ENCODE measurements at regions of chr5 and their contacts with region 1.

Region 1: GRCh38 chr5:66814146-66814991 is 218.2 kb downstream of the MAST4 start:
- DNase-seq: no peak
- H3K4me3 ChIP-seq: no peak overlapping the region
- H3K27ac ChIP-seq: no peak overlapping the region
- H3K27me3 ChIP-seq: peaks cover 23% of the 10 kb centered on the region
- CTCF ChIP-seq: peak; percentile 80

Region 2: GRCh38 chr5:66828548-66829357 is 14.4 kb after region 1 on chr5:
- CTCF ChIA-PET with region 1: interaction called, 58 read pairs
- POLR2A ChIA-PET with region 1: no interaction called
- DNase-seq: no peak
- H3K4me3 ChIP-seq: peak overlapping the region; percentile 66
- H3K27ac ChIP-seq: peak overlapping the region; percentile 43
- H3K27me3 ChIP-seq: peaks cover 15% of the 10 kb centered on the region
- CTCF ChIP-seq: no peak

Region 3: DNA sequence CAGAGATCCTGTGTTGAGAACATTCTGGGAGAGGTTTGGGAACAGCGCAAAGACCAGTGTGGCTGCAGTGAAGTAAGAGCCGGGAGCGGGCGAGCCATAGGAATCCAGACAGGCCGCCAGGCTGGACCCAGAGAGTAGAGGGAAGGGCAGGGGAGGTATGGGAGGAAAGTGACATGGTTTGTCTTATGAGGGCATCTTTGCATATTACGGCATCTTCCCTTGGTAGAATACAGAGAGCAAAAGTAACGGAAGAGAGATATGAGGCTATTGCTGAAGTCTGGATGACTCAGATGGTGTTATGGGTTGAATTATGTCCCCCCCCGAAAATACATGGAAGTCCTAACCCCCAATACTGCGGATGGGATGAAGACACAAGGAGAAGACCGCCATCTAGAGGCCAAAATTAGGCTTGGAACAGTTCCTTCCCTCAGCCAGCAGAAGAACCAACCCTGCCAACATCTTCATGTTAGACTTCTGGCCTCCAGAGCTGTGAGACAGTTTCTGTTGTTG is 50.0 kb after region 1 on chr5:
- CTCF ChIA-PET with region 1: interaction called, 33 read pairs
- POLR2A ChIA-PET with region 1: no interaction called
- DNase-seq: no peak
- H3K4me3 ChIP-seq: no peak overlapping the region
- H3K27ac ChIP-seq: no peak overlapping the region
- H3K27me3 ChIP-seq: peaks cover 4% of the 10 kb centered on the region
- CTCF ChIP-seq: peak; percentile 68

Measured in AG04450 (cell line).